Calu3 (cell line): ENCODE measurements at regions of chr5 and their contacts with region 1.

Region 1: GRCh38 chr5:152349683-152350526 is 55.2 kb downstream of the NMUR2 start:
- DNase-seq: peak; percentile 77
- H3K4me3 Mint-ChIP-seq: no peak overlapping the region
- H3K27ac Mint-ChIP-seq: no peak overlapping the region
- H3K4me1 Mint-ChIP-seq: peaks cover 13% of the 10 kb centered on the region
- H3K27me3 Mint-ChIP-seq: no peaks in the 10 kb centered on the region
- CTCF ChIP-seq: peak; percentile 95

Region 2: GRCh38 chr5:151825445-151825844 is 524.5 kb before region 1 on chr5:
- CTCF ChIA-PET with region 1: interaction called, 15 read pairs
- intact Hi-C with region 1: loop called (anchors 2 kb)
- DNase-seq: peak; percentile 70
- H3K4me3 Mint-ChIP-seq: no peak overlapping the region
- H3K27ac Mint-ChIP-seq: peak overlapping the region; percentile 19
- H3K4me1 Mint-ChIP-seq: peaks cover 11% of the 10 kb centered on the region
- H3K27me3 Mint-ChIP-seq: no peaks in the 10 kb centered on the region
- CTCF ChIP-seq: peak; percentile 90

Region 3: DNA sequence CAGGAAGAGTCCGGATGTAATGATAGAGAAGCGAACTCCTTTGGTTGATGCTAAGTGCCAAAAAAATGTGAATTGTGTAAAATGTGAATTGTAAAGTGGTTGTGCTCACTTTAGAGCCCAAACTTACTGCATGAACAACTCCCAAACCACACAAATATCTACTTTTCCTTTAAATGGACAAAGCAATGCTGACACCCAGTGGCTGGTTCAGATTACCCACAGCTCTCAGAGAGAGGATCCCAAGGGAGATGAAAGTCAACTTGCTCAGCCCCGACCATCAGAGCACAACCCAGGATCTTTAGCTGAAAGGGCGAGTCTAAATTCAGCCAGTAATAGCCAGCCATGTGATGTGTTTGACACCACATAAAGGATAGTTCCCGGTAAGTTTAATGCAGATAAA is 78.5 kb before region 1 on chr5:
- CTCF ChIA-PET with region 1: interaction called, 3 read pairs
- intact Hi-C with region 1: loop called (anchors 5 kb)
- DNase-seq: peak; percentile 52
- H3K4me3 Mint-ChIP-seq: no peak overlapping the region
- H3K27ac Mint-ChIP-seq: no peak overlapping the region
- H3K4me1 Mint-ChIP-seq: no peaks in the 10 kb centered on the region
- H3K27me3 Mint-ChIP-seq: peaks cover 9% of the 10 kb centered on the region
- CTCF ChIP-seq: peak; percentile 50

Region 4: DNA sequence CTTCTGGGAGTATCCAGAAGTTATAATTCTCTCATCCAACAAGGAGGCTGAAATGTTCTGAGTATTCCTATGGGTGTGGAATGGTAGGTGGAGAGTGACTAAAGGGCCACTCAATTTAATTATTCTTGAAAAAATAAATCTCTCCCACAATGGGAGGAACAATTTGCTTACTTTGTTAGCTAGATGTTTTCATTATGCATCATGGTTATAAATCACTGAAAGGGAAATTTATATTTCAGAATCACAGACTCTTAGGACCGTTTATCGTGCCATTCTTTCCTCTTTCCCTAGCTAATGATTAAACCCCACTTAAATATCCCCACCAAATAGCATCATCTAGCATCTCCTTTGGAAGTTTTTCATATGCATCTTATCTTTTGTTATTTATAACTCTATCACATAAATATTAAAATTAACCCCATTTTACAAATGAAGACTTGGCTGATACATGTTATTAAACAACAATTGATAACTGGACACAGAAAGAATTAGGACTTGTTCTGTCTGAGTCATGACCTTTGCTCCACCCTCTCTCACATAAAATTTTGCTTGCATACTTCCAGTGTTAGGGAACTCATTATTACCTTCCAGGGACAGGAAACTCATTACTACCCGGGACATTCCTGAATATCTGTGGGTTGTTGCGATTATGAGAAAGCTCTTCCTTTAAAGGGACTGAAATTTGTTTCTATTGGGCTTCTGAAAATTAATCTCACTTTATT is 150.1 kb after region 1 on chr5:
- CTCF ChIA-PET with region 1: interaction called, 10 read pairs
- intact Hi-C with region 1: no loop called
- DNase-seq: peak; percentile 62
- H3K4me3 Mint-ChIP-seq: peak overlapping the region; percentile 49
- H3K27ac Mint-ChIP-seq: peak overlapping the region; percentile 97
- H3K4me1 Mint-ChIP-seq: peaks cover 69% of the 10 kb centered on the region
- H3K27me3 Mint-ChIP-seq: no peaks in the 10 kb centered on the region
- CTCF ChIP-seq: no peak